ENCODE measurements at regions of chr16 and their contacts with region 1.

Region 1: DNA sequence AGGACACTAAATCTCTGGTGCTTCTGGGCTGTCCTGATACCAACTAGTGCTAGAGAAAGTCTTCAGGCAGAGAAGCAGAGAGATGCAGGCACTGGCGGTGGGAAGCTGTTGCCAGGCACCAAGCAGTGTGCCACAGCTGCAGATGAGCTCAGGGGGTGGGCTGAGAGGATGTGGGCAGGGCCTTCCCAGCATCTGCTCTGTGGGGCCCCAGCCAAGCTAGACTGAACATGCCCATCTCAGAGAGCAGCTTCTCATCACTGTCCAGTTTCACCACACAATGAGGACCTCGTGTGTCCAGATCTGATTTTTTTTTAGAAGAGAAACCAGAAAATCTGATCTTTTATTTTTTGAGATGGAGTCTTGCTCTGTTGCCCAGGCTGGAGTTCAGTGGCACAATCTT is 17.1 kb downstream of the PSKH1 start:
- DNase-seq: peak; percentile 35
- H3K4me3 ChIP-seq: no peak overlapping the region
- H3K27ac ChIP-seq: no peak overlapping the region
- H3K4me1 ChIP-seq: no peaks in the 10 kb centered on the region
- H3K27me3 ChIP-seq: no peaks in the 10 kb centered on the region
- CTCF ChIP-seq: no peak

Region 2: GRCh38 chr16:67783353-67783725 is 126.8 kb before region 1 on chr16:
- CTCF ChIA-PET with region 1: no interaction called
- POLR2A ChIA-PET with region 1: interaction called, 12 read pairs
- intact Hi-C with region 1: no loop called
- DNase-seq: no peak
- H3K4me3 ChIP-seq: no peak overlapping the region
- H3K27ac ChIP-seq: no peak overlapping the region
- H3K4me1 ChIP-seq: no peaks in the 10 kb centered on the region
- H3K27me3 ChIP-seq: no peaks in the 10 kb centered on the region
- CTCF ChIP-seq: no peak

Region 3: GRCh38 chr16:67883872-67884261 is 26.3 kb before region 1 on chr16:
- CTCF ChIA-PET with region 1: interaction called, 10 read pairs
- POLR2A ChIA-PET with region 1: no interaction called
- intact Hi-C with region 1: no loop called
- DNase-seq: peak; percentile 57
- H3K4me3 ChIP-seq: no peak overlapping the region
- H3K27ac ChIP-seq: no peak overlapping the region
- H3K4me1 ChIP-seq: peaks cover 11% of the 10 kb centered on the region
- H3K27me3 ChIP-seq: no peaks in the 10 kb centered on the region
- CTCF ChIP-seq: peak; percentile 93